ENCODE measurements at regions of chr5 and their contacts with region 1.

Region 1: GRCh38 chr5:67677422-67677970 is 480.9 kb upstream of the CD180 start:
- DNase-seq: peak; percentile 92 to 96
- ATAC-seq: peak; percentile 97 to 99
- H3K4me3 ChIP-seq: no peak overlapping the region
- H3K27ac ChIP-seq: peak overlapping the region; percentile 81 to 82 (median 81)
- H3K4me1 ChIP-seq: peaks cover 20 to 26% of the 10 kb centered on the region in 2 donors
- H3K27me3 ChIP-seq: no peaks in the 10 kb centered on the region
- CTCF ChIP-seq: no peak
- POLR2A ChIP-seq: peak in 1 of 2 donors; percentile 30

Region 2: DNA sequence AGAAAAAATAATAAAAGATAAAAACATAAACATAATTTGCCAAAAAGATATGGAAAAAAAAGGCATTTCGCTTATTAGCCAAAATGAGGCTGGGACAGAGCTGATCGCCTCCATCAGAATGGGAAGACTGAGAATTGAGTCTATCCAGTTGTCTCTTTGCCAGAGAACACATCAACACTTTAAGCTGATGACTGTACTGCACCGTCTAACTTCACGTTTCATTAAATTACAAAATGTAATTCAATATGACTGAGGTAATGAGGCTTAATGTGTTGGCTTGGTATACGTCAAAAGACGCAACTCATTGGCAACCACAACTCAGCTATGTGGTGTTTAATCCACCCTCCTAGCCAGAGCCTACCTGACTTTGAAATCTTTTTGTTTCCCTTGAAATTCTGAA is 18.2 kb before region 1 on chr5:
- in situ Hi-C with region 1: no loop called
- intact Hi-C with region 1: loop called (anchors 2 kb)
- DNase-seq: no peak
- ATAC-seq: peak; percentile 96 to 99
- H3K4me3 ChIP-seq: no peak overlapping the region
- H3K27ac ChIP-seq: peak overlapping the region in 3 of 4 donors; percentile 8 to 33 (median 24)
- H3K4me1 ChIP-seq: peaks cover 0 to 11% of the 10 kb centered on the region in 2 donors
- H3K27me3 ChIP-seq: no peaks in the 10 kb centered on the region
- CTCF ChIP-seq: no peak
- POLR2A ChIP-seq: peak in 1 of 2 donors; percentile 8

Measured in gastrocnemius medialis (tissue), 4 donors.